ENCODE measurements at regions of chr15 and their contacts with region 1.

Region 1: GRCh38 chr15:64731012-64731806 is 44.2 kb downstream of the RBPMS2 start:
- DNase-seq: peak; percentile 85 to 92
- ATAC-seq: peak; percentile 80 to 91 (median 90)
- H3K4me3 ChIP-seq: peak overlapping the region; percentile 9
- H3K27ac ChIP-seq: no peak overlapping the region
- H3K4me1 ChIP-seq: no peaks in the 10 kb centered on the region
- H3K27me3 ChIP-seq: no peaks in the 10 kb centered on the region
- CTCF ChIP-seq: peak; percentile 93

Region 2: GRCh38 chr15:64430000-64430735 is 301.0 kb before region 1 on chr15:
- intact Hi-C with region 1: no loop called
- DNase-seq: no peak
- ATAC-seq: peak in 1 of 4 donors; percentile 21
- H3K4me3 ChIP-seq: no peak overlapping the region
- H3K27ac ChIP-seq: no peak overlapping the region
- H3K4me1 ChIP-seq: no peaks in the 10 kb centered on the region
- H3K27me3 ChIP-seq: no peaks in the 10 kb centered on the region
- CTCF ChIP-seq: no peak

Region 3: GRCh38 chr15:64619880-64620839 is 111.0 kb before region 1 on chr15:
- intact Hi-C with region 1: no loop called
- DNase-seq: no peak
- ATAC-seq: no peak
- H3K4me3 ChIP-seq: no peak overlapping the region
- H3K27ac ChIP-seq: no peak overlapping the region
- H3K4me1 ChIP-seq: peaks cover 29% of the 10 kb centered on the region
- H3K27me3 ChIP-seq: no peaks in the 10 kb centered on the region
- CTCF ChIP-seq: no peak

Region 4: GRCh38 chr15:64634576-64635498 is 96.4 kb before region 1 on chr15:
- intact Hi-C with region 1: no loop called
- DNase-seq: no peak
- ATAC-seq: peak in 2 of 4 donors; percentile 51 to 66
- H3K4me3 ChIP-seq: no peak overlapping the region
- H3K27ac ChIP-seq: peak overlapping the region; percentile 42
- H3K4me1 ChIP-seq: peaks cover 22% of the 10 kb centered on the region
- H3K27me3 ChIP-seq: no peaks in the 10 kb centered on the region
- CTCF ChIP-seq: no peak

Region 5: GRCh38 chr15:64667736-64668161 is 63.5 kb before region 1 on chr15:
- intact Hi-C with region 1: no loop called
- DNase-seq: no peak
- ATAC-seq: no peak
- H3K4me3 ChIP-seq: no peak overlapping the region
- H3K27ac ChIP-seq: no peak overlapping the region
- H3K4me1 ChIP-seq: no peaks in the 10 kb centered on the region
- H3K27me3 ChIP-seq: no peaks in the 10 kb centered on the region
- CTCF ChIP-seq: no peak

Region 6: DNA sequence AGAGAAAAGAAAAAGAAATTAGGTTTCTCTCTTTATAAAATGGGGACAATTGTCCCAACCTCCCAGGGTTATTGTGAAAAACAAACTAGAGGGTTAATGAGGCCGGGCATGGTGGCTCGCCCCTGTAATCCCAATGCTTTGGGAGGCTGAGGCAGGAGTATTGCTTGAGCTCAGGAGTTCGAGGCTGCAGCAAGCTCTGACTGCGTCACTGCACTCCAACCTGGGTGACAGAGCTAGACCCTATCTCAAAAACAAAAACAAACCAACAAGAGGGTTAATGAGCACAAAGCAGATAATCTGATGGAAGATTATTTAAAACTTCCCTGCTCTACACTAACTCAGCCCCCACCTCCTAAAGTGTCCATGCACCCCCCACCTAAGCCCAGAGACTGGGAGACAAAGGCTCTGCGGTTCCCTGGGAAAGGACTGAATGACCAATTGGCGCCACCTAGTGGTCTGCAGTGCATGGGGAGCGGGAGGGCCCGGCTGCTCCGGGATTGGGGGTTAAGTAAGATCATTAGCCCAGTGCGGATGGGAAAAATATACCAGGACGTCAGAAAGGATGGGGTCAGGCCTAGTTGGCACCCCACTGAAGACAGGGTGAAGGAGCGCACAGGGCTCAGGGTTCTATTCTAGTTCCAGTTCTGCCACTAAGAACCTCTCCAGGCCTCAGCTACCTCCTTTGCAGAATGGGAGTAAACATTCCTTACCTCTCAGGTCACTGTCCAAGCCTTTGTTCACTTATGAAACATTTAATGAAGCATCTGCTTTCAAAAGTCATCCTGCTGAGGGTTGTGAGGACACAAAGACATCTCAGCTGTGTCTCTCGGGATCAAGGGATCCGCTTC is 78.7 kb after region 1 on chr15:
- intact Hi-C with region 1: loop called (anchors 1 kb)
- DNase-seq: peak; percentile 81 to 87
- ATAC-seq: peak; percentile 85 to 96 (median 88)
- H3K4me3 ChIP-seq: no peak overlapping the region
- H3K27ac ChIP-seq: no peak overlapping the region
- H3K4me1 ChIP-seq: no peaks in the 10 kb centered on the region
- H3K27me3 ChIP-seq: no peaks in the 10 kb centered on the region
- CTCF ChIP-seq: peak; percentile 86

Region 7: DNA sequence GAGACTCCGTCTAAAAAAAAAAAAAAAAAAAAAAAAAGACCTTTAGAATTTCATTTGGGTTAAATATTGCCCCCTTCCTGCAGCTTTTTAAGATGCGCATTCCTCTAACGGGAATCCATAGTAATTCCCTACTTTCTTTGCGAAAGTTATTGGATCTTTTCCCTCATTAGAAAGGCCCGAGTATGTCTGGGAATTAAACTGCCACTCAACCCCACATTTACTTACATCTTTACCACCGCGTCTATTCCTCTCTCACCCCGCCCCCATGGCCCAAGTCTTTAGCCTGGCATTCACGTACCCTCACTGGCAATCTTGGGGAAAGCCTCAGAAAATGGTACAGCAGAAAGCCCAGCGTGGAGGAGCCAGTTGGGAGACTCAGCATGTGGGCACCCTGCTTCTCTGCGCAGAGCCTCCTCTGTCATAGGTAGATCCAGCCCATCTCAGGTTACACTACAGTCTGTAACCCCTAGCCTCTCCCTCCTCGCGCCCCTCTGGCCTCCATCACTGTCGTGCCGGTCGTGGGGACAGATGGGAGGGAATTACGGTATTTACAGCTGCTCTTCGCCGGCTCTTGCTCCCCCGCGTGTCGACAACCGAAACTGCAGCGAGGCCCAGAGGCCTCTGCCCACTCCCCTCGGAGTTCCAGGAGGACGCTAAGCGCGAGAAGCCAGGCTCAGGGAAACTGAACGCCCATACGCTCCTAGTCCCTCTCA is 174.1 kb after region 1 on chr15:
- intact Hi-C with region 1: loop called (anchors 1 to 5 kb)
- DNase-seq: peak; percentile 81 to 86
- ATAC-seq: peak; percentile 69 to 93 (median 88)
- H3K4me3 ChIP-seq: peak overlapping the region; percentile 45
- H3K27ac ChIP-seq: no peak overlapping the region
- H3K4me1 ChIP-seq: no peaks in the 10 kb centered on the region
- H3K27me3 ChIP-seq: peaks cover 0 to 16% (median 0%) of the 10 kb centered on the region in 3 donors
- CTCF ChIP-seq: peak; percentile 70

Measured in psoas muscle (tissue), 8 donors.